Naive thymus-derived CD4-positive, alpha-beta T cell (primary cell): ENCODE measurements at regions of chr6 and their contacts with region 1.

Region 1: DNA sequence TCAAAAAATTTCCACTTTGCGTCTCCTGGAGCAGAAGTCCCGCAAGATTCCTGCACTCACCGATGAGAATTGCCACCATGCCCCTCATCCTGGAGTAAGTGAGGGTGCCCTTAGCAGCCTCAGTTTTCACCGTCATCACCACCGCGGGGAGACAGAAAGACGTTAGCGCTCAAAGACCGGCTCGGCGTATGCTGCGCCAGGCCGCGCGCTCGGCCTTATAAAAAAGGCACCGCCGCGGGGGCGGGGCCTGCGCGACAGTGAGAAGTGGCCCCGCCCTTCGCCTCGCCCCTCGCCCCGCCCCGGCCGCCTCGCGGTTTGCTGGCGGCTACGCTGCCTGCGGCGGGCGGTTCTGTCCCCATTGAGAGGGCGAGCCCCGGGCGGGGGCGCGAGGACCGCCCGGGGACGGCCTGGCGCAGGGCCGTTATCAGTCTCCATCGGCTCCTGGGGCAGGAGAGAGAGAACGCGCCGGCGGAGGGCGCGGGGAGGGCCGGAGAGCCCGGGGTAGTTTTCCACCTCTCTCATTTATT is 122.3 kb upstream of the SLC2A12 start:
- DNase-seq: peak; percentile 87 to 97 (median 93)
- ATAC-seq: peak; percentile 89
- H3K4me3 ChIP-seq: peak overlapping the region; percentile 71
- H3K4me3 Mint-ChIP-seq: peak overlapping the region; percentile 86 to 100 (median 98)
- H3K27ac ChIP-seq: peak overlapping the region; percentile 88
- H3K27ac Mint-ChIP-seq: peak overlapping the region; percentile 89 to 99 (median 97)
- H3K4me1 ChIP-seq: peaks cover 11 to 52% of the 10 kb centered on the region in 2 donors
- H3K4me1 Mint-ChIP-seq: peaks cover 48 to 78% (median 75%) of the 10 kb centered on the region in 7 donors
- H3K27me3 ChIP-seq: no peaks in the 10 kb centered on the region
- H3K27me3 Mint-ChIP-seq: no peaks in the 10 kb centered on the region

Region 2: GRCh38 chr6:133952815-133953633 is 221.7 kb before region 1 on chr6 and contains the start of gene TBPL1:
- CTCF ChIA-PET with region 1: no interaction called
- POLR2A ChIA-PET with region 1: no interaction called
- intact Hi-C with region 1: loop called in 1 of 2 experiments (anchors 1 kb)
- DNase-seq: peak; percentile 60 to 81 (median 78)
- ATAC-seq: peak; percentile 95
- H3K4me3 ChIP-seq: peak within 1 kb of the TSS; percentile 85
- H3K4me3 Mint-ChIP-seq: peak within 1 kb of the TSS; percentile 96 to 100 (median 98)
- H3K27ac ChIP-seq: peak within 1 kb of the TSS; percentile 81
- H3K27ac Mint-ChIP-seq: peak within 1 kb of the TSS; percentile 83 to 99 (median 95)
- H3K4me1 ChIP-seq: peaks cover 10 to 25% of the 10 kb centered on the region in 2 donors
- H3K4me1 Mint-ChIP-seq: peaks cover 32 to 53% (median 45%) of the 10 kb centered on the region in 7 donors
- H3K27me3 ChIP-seq: no peaks in the 10 kb centered on the region
- H3K27me3 Mint-ChIP-seq: peaks cover 0 to 10% (median 0%) of the 10 kb centered on the region in 5 donors
- total RNA-seq, gene TBPL1: 21.0 to 34.7 (median 25.4) TPM

Region 3: DNA sequence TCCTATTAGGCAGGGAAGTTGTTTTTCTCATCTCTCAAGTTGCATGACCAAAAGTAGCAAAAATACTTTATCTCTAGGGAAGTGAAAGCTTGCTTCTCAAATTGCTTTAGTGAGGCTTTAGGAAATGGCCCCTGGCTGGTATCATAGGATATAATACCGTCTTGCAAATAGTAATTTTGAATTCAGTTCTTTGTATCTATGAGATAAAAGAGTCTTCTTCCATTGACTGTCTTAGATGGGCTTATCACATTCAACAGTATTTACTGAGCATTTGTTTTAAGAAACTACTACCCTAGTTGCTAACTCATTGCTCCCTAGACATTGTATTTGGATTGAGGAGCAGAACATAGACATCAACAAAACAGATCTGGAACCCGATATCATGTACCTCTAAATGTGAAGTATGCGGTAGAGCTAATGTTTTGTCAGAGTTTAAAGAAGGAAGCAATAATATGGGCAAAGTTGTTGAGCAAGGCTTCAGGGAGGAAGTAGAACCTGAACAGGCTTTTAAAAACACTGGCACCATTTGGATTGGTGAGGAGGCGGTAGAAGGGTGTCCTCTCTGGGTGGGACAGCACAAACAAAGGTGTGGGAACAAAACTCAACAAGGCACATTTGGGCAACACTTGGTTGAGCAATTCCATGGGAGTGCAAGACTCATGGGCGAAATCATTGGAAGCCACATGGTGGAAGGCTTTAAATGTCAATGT is 41.7 kb after region 1 on chr6:
- CTCF ChIA-PET with region 1: no interaction called
- POLR2A ChIA-PET with region 1: no interaction called
- intact Hi-C with region 1: no loop called
- DNase-seq: no peak
- ATAC-seq: peak; percentile 46
- H3K4me3 ChIP-seq: no peak overlapping the region
- H3K4me3 Mint-ChIP-seq: no peak overlapping the region
- H3K27ac ChIP-seq: no peak overlapping the region
- H3K27ac Mint-ChIP-seq: peak overlapping the region in 5 of 9 donors; percentile 3 to 27 (median 5)
- H3K4me1 ChIP-seq: no peaks in the 10 kb centered on the region
- H3K4me1 Mint-ChIP-seq: peaks cover 6 to 24% (median 15%) of the 10 kb centered on the region in 7 donors
- H3K27me3 ChIP-seq: no peaks in the 10 kb centered on the region
- H3K27me3 Mint-ChIP-seq: no peaks in the 10 kb centered on the region

Region 4: GRCh38 chr6:134317471-134318131 is 142.9 kb after region 1 on chr6 and contains the start of gene SGK1:
- CTCF ChIA-PET with region 1: interaction called, 8 read pairs
- POLR2A ChIA-PET with region 1: interaction called, 11 read pairs
- intact Hi-C with region 1: loop called (anchors 1 kb)
- DNase-seq: peak; percentile 6 to 40 (median 32)
- ATAC-seq: peak; percentile 77
- H3K4me3 ChIP-seq: peak within 1 kb of the TSS; percentile 68
- H3K4me3 Mint-ChIP-seq: peak within 1 kb of the TSS; percentile 85 to 99 (median 91)
- H3K27ac ChIP-seq: peak within 1 kb of the TSS; percentile 37
- H3K27ac Mint-ChIP-seq: peak within 1 kb of the TSS in 6 of 9 donors; percentile 50 to 84 (median 77)
- H3K4me1 ChIP-seq: peaks cover 0 to 6% of the 10 kb centered on the region in 2 donors
- H3K4me1 Mint-ChIP-seq: peaks cover 2 to 47% (median 29%) of the 10 kb centered on the region in 7 donors
- H3K27me3 ChIP-seq: no peaks in the 10 kb centered on the region
- H3K27me3 Mint-ChIP-seq: peaks cover 0 to 56% (median 21%) of the 10 kb centered on the region in 5 donors
- total RNA-seq, gene SGK1: 16.4 to 443 (median 32.4) TPM

Region 5: DNA sequence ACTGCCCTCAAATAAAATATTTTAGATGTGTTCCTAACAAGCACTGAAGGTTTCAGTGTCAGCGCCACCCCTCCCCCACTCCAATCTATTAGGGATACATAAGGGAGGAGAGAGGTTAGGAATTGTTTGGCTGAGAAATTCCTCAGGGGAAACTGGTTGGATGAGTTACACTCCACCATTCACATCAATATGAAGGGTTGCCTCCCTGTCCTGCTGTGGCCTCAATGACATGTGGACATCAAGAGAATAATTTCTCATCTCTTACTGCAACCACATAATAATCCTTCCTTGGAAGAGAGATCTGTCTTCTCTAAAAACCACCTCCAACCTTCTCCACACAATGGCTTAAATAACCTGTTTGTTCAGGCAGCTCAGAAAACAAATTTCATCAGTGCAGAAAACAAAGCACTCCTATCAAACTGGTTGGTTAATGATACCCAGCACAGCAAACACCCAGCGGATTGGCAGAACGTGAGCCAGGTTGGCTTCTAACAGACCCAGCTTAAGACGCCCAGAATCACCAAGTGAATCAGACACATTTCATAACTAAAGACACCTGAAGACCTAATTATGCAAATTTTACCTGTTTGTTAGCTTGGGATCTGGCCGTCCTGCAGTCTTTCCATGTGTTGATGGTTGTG is 279.3 kb after region 1 on chr6:
- CTCF ChIA-PET with region 1: interaction called, 3 read pairs
- POLR2A ChIA-PET with region 1: no interaction called
- intact Hi-C with region 1: loop called in 1 of 2 experiments (anchors 5 kb)
- DNase-seq: no peak
- ATAC-seq: no peak
- H3K4me3 ChIP-seq: no peak overlapping the region
- H3K4me3 Mint-ChIP-seq: no peak overlapping the region
- H3K27ac ChIP-seq: no peak overlapping the region
- H3K27ac Mint-ChIP-seq: no peak overlapping the region
- H3K4me1 ChIP-seq: no peaks in the 10 kb centered on the region
- H3K4me1 Mint-ChIP-seq: peaks cover 0 to 18% (median 5%) of the 10 kb centered on the region in 7 donors
- H3K27me3 ChIP-seq: no peaks in the 10 kb centered on the region
- H3K27me3 Mint-ChIP-seq: peaks cover 0 to 9% (median 0%) of the 10 kb centered on the region in 5 donors

Region 6: GRCh38 chr6:135014353-135014832 is 839.7 kb after region 1 on chr6:
- CTCF ChIA-PET with region 1: no interaction called
- POLR2A ChIA-PET with region 1: no interaction called
- intact Hi-C with region 1: loop called in 1 of 2 experiments (anchors 5 kb)
- DNase-seq: peak in 7 of 9 donors; percentile 25 to 66 (median 52)
- ATAC-seq: peak; percentile 89
- H3K4me3 ChIP-seq: peak overlapping the region; percentile 8
- H3K4me3 Mint-ChIP-seq: peak overlapping the region; percentile 3 to 83 (median 71)
- H3K27ac ChIP-seq: peak overlapping the region; percentile 62
- H3K27ac Mint-ChIP-seq: peak overlapping the region; percentile 76 to 94 (median 85)
- H3K4me1 ChIP-seq: peaks cover 18 to 51% of the 10 kb centered on the region in 2 donors
- H3K4me1 Mint-ChIP-seq: peaks cover 43 to 85% (median 81%) of the 10 kb centered on the region in 7 donors
- H3K27me3 ChIP-seq: no peaks in the 10 kb centered on the region
- H3K27me3 Mint-ChIP-seq: no peaks in the 10 kb centered on the region

Region 7: GRCh38 chr6:135438907-135439535 is 1264.3 kb after region 1 on chr6:
- CTCF ChIA-PET with region 1: no interaction called
- POLR2A ChIA-PET with region 1: no interaction called
- intact Hi-C with region 1: loop called (anchors 1 to 5 kb)
- DNase-seq: peak in 6 of 9 donors; percentile 23 to 39 (median 27)
- ATAC-seq: peak; percentile 72
- H3K4me3 ChIP-seq: no peak overlapping the region
- H3K4me3 Mint-ChIP-seq: peak overlapping the region in 8 of 10 donors; percentile 15 to 85 (median 72)
- H3K27ac ChIP-seq: no peak overlapping the region
- H3K27ac Mint-ChIP-seq: peak overlapping the region in 7 of 9 donors; percentile 7 to 87 (median 60)
- H3K4me1 ChIP-seq: peaks cover 0 to 8% of the 10 kb centered on the region in 2 donors
- H3K4me1 Mint-ChIP-seq: peaks cover 12 to 27% (median 20%) of the 10 kb centered on the region in 7 donors
- H3K27me3 ChIP-seq: no peaks in the 10 kb centered on the region
- H3K27me3 Mint-ChIP-seq: no peaks in the 10 kb centered on the region